Activated CD4-positive, alpha-beta T cell treated with anti-CD3 and anti-CD28 coated beads, Interleukin-2, amount 10 ng/mL, durations not matched to agents 24 days and 14 days (primary cell): ENCODE measurements at regions of chr1 and their contacts with region 1.

Region 1: GRCh38 chr1:45583264-45583665 is 576 bp upstream of the NASP start:
- DNase-seq: peak; percentile 98
- H3K4me3 Mint-ChIP-seq: peak overlapping the region; percentile 99
- H3K27ac Mint-ChIP-seq: peak overlapping the region; percentile 98
- H3K4me1 Mint-ChIP-seq: peaks cover 22% of the 10 kb centered on the region
- H3K27me3 Mint-ChIP-seq: no peaks in the 10 kb centered on the region

Region 2: DNA sequence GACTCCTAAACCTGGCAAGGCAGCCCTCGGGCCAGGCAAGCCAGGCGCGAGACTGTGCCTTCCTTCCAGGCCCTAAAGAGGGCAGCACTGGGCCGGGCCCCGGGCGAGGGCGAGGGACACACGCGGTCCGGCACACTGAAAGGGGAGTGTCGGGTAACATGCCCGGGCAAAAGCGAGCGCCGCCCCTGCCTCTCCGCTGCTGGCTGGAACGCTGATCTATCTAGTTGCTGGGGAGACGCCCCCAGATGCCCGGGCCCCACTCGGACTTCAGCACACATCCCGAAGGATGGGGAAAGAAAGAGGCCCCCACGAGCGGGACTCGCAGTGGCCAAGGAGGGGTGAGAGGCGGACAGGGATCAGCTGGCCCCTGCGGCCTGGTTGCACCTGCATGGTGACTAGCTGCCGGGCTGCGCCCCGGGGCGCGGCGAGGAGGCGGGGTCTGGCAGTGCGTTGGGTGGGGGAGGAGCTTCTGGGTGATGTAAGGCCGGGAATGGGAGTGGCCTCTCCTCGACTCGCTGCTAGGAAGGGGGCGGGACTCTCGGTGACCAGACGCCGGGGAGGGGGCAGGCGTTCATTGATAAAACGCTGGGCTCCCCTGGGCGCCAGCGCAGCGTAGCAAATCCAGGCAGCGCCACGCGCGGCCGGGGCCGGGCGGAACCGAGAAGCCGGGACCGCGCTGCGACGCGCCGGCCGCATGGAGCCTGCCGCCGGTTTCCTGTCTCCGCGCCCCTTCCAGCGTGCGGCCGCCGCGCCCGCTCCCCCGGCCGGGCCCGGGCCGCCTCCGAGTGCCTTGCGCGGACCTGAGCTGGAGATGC is 783.3 kb before region 1 on chr1 and contains the start of gene PLK3:
- intact Hi-C with region 1: loop called (anchors 10 kb)
- DNase-seq: peak; percentile 99
- H3K4me3 Mint-ChIP-seq: peak within 1 kb of the TSS; percentile 99
- H3K27ac Mint-ChIP-seq: peak within 1 kb of the TSS; percentile 100
- H3K4me1 Mint-ChIP-seq: peaks cover 35% of the 10 kb centered on the region
- H3K27me3 Mint-ChIP-seq: no peaks in the 10 kb centered on the region
- total RNA-seq, gene PLK3: 190 and 205 TPM in 2 replicates

Region 3: DNA sequence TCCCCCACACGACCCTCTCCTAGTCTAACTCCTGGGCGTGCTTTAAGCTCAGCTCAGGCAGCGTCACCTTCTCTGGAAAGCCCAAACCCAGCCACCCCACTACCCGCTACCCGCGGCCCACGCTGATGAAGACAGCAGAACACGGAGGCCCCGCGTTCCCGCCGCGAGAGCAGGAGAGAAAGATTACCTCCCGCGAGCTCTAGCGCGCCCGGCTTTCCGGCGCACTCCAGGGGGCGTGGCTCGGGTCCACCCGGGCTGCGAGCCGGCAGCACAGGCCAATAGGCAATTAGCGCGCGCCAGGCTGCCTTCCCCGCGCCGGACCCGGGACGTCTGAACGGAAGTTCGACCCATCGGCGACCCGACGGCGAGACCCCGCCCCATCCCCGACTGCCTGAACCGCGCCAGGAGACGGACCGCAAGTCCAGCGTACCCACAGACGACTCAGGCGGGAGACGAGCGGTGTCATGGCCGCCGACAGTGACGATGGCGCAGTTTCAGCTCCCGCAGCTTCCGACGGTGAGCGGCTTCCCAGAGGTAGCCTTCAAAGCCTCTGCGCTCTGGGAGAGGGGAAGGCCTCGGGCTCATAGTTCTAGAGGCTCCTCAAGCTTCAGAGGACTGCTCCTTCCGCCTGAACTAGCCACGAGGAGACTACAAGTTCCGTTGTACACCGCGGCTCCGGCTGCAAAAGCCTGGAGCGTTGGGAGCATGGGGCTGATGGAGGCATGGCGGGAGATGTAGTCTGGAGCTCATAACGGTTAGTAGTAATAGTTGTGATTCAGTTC is 243.3 kb before region 1 on chr1 and contains the starts of genes MUTYH and TOE1:
- intact Hi-C with region 1: loop called (anchors 1 kb)
- DNase-seq: peak; percentile 98
- H3K4me3 Mint-ChIP-seq: peak within 1 kb of the TSS; percentile 98
- H3K27ac Mint-ChIP-seq: peak within 1 kb of the TSS; percentile 99
- H3K4me1 Mint-ChIP-seq: peaks cover 45% of the 10 kb centered on the region
- H3K27me3 Mint-ChIP-seq: no peaks in the 10 kb centered on the region
- total RNA-seq, gene MUTYH: 55.6 and 57.0 TPM in 2 replicates
- total RNA-seq, gene TOE1: 38.2 and 44.8 TPM in 2 replicates

Region 4: GRCh38 chr1:45442272-45442671 is 141.0 kb before region 1 on chr1:
- intact Hi-C with region 1: no loop called
- DNase-seq: no peak
- H3K4me3 Mint-ChIP-seq: no peak overlapping the region
- H3K27ac Mint-ChIP-seq: no peak overlapping the region
- H3K4me1 Mint-ChIP-seq: no peaks in the 10 kb centered on the region
- H3K27me3 Mint-ChIP-seq: no peaks in the 10 kb centered on the region

Region 5: DNA sequence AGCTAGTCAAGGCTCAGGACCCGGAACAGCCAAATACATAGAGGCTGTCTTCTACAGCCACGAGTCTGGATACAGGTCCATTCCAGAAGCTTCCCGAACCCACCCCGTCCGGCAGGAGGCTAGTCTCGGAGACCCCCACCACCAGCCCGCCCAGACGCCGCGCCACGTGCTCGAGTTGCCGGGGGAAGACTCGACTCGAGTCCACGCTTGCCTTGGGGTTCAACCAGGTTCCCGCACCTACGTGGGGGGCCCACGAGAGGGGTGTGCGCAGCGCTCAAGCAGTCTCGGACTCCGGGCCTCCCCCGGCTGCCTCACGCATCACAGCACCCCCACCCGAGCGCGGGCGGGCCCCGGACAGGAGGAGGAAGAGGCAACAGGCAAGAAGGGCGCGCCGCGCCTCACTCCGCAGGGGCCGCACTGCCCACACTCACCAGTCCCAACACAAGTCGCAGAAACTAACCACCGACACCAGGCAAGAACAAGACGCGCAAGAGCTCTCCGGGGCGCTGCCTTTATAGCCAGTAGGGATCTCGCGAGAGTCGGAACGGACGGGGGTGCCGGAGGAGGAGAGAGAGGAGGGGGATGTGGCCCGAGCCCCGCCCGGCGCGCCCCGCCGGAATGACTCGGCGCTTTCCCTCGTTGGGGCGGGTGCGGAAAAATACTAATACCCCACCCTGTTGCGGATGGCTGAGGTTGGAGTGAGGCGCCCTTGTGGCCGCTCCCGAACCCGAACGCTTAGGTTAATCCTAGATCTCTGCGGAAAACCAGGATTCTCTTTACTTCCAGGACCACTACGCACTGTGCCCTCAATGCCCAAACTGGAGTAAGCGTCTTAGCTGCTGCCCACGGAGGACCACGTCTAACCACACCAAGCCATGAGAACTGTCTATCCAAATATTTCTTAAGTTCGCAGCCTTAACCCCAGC is 61.6 kb before region 1 on chr1 and contains the start of gene PRDX1:
- intact Hi-C with region 1: loop called (anchors 1 kb)
- DNase-seq: peak; percentile 99
- H3K4me3 Mint-ChIP-seq: peak within 1 kb of the TSS; percentile 99
- H3K27ac Mint-ChIP-seq: peak within 1 kb of the TSS; percentile 94
- H3K4me1 Mint-ChIP-seq: peaks cover 31% of the 10 kb centered on the region
- H3K27me3 Mint-ChIP-seq: peaks cover 2% of the 10 kb centered on the region
- total RNA-seq, gene PRDX1: 682 and 710 TPM in 2 replicates

Region 6: GRCh38 chr1:45686317-45687013 is 103.2 kb after region 1 on chr1 and contains the start of gene GPBP1L1:
- intact Hi-C with region 1: loop called (anchors 1 kb)
- DNase-seq: peak; percentile 99
- H3K4me3 Mint-ChIP-seq: peak within 1 kb of the TSS; percentile 98
- H3K27ac Mint-ChIP-seq: peak within 1 kb of the TSS; percentile 97
- H3K4me1 Mint-ChIP-seq: peaks cover 31% of the 10 kb centered on the region
- H3K27me3 Mint-ChIP-seq: no peaks in the 10 kb centered on the region
- total RNA-seq, gene GPBP1L1: 101 and 104 TPM in 2 replicates

Region 7: DNA sequence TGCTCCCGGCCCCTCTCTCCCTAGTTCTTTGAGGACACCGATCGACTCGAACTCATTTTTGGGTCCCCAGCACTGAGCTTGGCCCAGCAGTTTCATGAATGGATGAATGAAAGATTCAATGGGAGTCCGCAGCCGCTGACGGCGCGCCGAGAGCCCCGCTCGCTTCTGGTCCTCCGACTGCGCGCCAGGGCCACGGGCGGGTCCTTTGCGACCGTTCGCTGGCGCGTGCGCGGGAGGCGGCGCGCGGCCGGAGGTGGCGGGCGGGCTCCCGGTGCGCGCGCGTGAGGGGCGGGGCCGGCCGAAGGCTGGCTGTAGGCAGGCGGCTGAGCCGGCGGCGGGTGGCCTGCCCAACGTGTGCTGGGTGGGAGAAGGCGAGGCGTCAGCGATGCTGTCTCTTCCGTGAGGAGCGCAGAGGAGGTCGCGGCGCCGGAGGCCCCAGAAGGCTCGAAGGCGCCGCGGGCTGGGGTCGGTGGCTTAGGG is 220.1 kb after region 1 on chr1 and contains the start of gene MAST2:
- intact Hi-C with region 1: loop called (anchors 1 kb)
- DNase-seq: peak; percentile 97
- H3K4me3 Mint-ChIP-seq: peak within 1 kb of the TSS; percentile 93
- H3K27ac Mint-ChIP-seq: peak within 1 kb of the TSS; percentile 78
- H3K4me1 Mint-ChIP-seq: peaks cover 28% of the 10 kb centered on the region
- H3K27me3 Mint-ChIP-seq: no peaks in the 10 kb centered on the region
- total RNA-seq, gene MAST2: 31.4 and 33.1 TPM in 2 replicates